Thyroid gland (tissue), 4 donors: ENCODE measurements at regions of chr17 and their contacts with region 1.

Region 1: DNA sequence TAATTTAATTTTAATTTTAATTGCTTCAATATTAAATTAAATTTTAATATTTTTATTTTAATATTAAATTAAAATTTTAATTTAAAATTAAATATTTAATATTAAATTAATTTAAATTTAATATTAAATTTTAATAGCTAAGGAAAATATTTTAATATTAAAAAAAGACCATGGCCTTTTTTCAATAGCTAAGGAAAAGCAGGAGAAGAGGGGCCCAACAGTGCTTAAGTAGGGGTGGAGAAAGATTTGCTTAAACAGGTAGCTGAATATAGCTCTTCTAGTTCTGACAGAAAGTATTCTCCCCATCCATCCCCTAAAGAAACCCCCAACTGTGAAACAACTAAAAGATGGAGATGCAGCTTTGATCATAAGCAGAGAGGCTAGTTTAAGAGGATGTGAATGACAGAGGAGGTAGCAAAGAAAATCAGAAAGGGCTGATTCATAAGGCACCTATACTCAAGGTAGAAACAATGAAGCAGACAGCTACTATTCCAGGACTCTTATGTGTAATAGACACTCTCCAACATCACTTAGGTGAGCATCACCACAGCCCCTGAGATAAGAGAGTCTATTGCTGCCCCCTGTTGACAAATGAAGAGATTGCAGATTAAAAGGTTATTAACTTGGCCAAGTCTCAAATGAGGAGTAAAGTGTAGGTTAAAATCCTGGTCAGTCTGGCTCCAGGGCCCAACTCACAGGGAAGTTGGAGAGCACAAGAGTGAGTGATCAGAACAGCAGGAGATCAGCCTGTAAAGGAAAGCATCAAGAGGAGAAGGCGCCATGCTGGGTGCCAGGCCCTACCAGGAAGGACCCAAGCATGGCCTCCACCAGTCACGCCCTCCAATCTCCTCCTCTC is 7.8 kb upstream of the RNASEK start:
- DNase-seq: no peak
- H3K4me3 ChIP-seq: no peak overlapping the region
- H3K27ac ChIP-seq: no peak overlapping the region
- H3K4me1 ChIP-seq: no peaks in the 10 kb centered on the region
- H3K27me3 ChIP-seq: no peaks in the 10 kb centered on the region
- CTCF ChIP-seq: peak in 4 of 6 experiments; percentile 56 to 67 (median 64)
- POLR2A ChIP-seq: no peak

Region 2: GRCh38 chr17:6913608-6914443 is 90.8 kb before region 1 on chr17:
- intact Hi-C with region 1: loop called (anchors 5 kb)
- DNase-seq: peak; percentile 49 to 69
- H3K4me3 ChIP-seq: no peak overlapping the region
- H3K27ac ChIP-seq: no peak overlapping the region
- H3K4me1 ChIP-seq: peaks cover 0 to 9% of the 10 kb centered on the region in 2 donors
- H3K27me3 ChIP-seq: no peaks in the 10 kb centered on the region
- CTCF ChIP-seq: peak; percentile 30 to 64 (median 52)
- POLR2A ChIP-seq: no peak